Posterior cingulate gyrus (tissue), 11 donors: ENCODE measurements at regions of chrX and their contacts with region 1.

Region 1: GRCh38 chrX:46758906-46759644 is at the start of gene SLC9A7:
- DNase-seq: peak; percentile 37 to 95 (median 64)

Region 2: GRCh38 chrX:47078129-47079043 is 319.3 kb after region 1 on chrX and contains the start of gene RGN:
- intact Hi-C with region 1: no loop called
- DNase-seq: peak in 8 of 10 donors; percentile 4 to 85 (median 29)

Region 3: DNA sequence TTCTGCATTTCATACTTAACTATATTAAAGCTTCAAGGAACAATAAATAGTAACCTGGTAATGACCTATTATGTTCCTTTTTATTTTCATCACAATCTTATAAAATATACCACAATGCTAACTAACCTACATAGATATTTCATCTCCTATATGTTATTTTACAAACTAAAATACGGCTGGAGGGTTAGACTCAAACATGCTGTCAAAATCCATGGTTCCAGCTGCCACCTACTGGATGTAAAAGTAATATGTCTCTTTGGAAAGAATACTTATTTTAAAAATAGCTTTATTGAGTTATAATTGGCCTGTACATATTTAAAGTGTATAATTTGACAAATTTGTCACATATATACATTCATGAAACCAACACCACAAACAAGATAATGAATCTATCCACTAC is 334.2 kb after region 1 on chrX:
- intact Hi-C with region 1: loop called (anchors 2 kb)
- DNase-seq: peak in 1 of 10 donors; percentile 10